MCF 10A (cell line): ENCODE measurements at regions of chr10 and their contacts with region 1.

Region 1: DNA sequence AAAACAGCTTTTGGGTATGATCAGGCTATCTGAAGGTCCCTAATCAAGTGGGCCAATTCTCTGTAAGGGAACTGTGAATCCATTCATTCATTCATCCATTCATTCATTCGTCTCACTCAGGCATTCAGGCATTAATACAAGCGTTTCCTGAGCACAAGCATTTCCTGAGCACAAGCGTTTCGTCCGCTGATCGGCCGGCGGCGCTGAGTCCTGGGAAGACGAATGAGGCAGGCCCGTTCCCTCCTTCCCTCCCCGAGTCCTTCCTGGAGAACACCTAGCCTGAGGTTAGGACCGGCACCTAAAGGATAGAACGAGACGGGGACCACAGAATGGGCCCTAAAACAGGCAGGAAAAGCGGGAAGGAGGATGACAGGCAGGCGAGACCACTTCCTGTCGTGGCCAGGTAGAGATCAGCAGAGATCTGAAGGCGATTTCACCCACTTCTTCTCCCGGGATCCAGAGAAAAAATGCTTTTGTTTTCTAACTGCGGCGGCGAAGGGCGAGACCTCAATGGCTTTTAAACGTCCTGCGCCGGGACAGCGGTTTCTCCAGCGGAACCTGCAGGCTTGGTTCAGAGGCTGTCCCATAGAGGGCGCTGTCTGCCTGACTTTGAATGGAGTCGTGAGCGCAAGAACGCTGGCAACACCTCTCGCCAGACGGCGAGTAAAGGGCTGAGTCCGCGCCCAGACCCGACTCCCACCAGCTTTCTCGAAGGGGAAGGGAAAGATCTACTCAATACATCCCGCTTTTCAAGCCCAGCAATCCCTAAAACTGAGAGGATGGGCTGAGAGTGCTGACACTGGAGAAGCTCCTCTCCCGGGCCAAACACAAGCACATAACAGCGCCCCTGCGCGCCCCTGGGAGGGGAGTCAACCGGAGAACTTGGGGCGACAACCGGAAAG is 2.9 kb upstream of the HMX3 start:
- DNase-seq: peak; percentile 84
- H3K4me3 Mint-ChIP-seq: peak overlapping the region; percentile 51
- H3K27ac Mint-ChIP-seq: no peak overlapping the region
- H3K4me1 Mint-ChIP-seq: peaks cover 8% of the 10 kb centered on the region
- H3K27me3 Mint-ChIP-seq: peaks cover 24% of the 10 kb centered on the region
- CTCF ChIP-seq: peak; percentile 87

Region 2: DNA sequence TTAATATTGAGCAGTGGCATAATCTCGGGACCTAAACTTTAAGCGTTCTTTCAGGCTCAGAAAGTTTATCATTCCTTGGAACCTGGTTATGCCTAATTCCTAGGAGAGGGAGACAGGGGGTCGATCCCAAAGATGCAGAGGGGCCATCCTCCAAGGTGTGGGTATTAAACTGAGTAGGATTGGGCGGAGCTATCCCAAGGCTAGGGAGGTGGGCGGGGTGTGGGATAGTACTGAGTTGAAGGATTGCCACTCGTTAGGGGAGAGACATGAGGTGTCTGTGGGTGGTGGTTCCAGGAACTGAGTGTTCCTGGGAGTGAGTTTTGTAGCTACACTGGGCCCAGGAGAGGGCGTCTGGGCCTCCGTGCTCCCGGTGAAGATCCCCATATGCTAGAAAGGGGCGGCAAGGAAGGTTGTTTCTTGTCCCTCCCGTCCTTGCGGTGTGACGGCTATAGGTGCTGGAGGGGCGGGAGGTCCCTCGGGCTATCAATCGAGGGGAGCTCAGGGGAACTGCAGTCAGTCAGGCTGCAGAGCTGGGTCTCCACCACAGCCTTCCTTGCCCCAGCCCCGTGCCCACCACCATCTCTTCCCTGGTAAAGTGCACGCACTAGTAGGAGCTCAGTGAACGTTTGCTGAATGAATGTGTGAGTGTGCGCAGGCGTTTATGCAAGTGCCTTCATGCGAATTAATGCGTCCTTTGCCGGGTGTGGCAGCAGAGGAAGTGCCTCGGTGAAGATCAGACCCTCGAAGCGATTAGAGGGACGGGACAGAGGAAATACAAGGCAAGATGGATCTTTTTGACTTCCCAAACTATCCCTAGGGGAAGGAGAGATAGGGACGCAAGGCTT is 12.1 kb after region 1 on chr10:
- CTCF ChIA-PET with region 1: interaction called, 10 read pairs
- POLR2A ChIA-PET with region 1: interaction called, 3 read pairs
- intact Hi-C with region 1: no loop called
- DNase-seq: no peak
- H3K4me3 Mint-ChIP-seq: no peak overlapping the region
- H3K27ac Mint-ChIP-seq: no peak overlapping the region
- H3K4me1 Mint-ChIP-seq: peaks cover 6% of the 10 kb centered on the region
- H3K27me3 Mint-ChIP-seq: peaks cover 35% of the 10 kb centered on the region
- CTCF ChIP-seq: no peak

Region 3: GRCh38 chr10:123380497-123381085 is 247.8 kb after region 1 on chr10:
- CTCF ChIA-PET with region 1: interaction called, 50 read pairs
- POLR2A ChIA-PET with region 1: interaction called, 5 read pairs
- intact Hi-C with region 1: loop called (anchors 1 kb)
- DNase-seq: peak; percentile 33
- H3K4me3 Mint-ChIP-seq: no peak overlapping the region
- H3K27ac Mint-ChIP-seq: no peak overlapping the region
- H3K4me1 Mint-ChIP-seq: peaks cover 18% of the 10 kb centered on the region
- H3K27me3 Mint-ChIP-seq: no peaks in the 10 kb centered on the region
- CTCF ChIP-seq: peak; percentile 41

Region 4: DNA sequence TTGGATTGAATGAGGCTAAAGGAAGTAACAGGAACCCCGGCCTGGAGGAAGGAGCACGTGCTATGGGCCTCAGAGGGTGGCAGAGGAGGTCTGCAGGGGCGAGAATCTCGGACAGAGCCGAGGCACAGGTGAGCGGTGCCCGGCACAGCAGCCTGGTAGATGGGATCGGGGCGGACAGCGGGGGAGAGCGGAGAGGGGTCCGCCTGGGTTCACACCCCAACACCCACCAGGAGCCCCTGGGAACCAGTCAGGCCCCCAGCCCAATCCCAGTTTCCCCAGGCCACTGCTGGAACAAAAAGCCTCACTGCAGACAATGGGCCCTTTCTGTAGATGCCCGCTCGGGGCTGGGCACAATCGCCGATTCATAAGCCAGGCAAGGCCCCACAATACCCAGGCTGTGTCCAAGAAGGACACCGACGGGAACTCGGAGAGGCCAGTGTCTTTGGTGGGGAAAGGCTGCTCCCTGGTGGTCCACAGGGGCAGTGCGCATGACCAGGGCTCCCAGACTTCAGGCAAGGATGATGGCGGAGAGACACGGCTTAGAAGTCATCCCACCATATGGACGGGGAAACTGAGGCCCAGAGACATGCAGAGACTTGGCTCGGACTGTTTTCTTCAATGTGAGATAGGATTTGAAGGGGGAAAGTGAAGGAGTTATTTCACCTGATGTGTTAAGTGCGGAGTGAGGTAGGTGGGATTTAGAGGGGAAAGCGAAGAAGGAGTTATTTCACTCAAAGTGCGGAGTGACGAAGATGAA is 426.4 kb after region 1 on chr10:
- CTCF ChIA-PET with region 1: interaction called, 19 read pairs
- POLR2A ChIA-PET with region 1: no interaction called
- intact Hi-C with region 1: loop called (anchors 1 kb)
- DNase-seq: peak; percentile 71
- H3K4me3 Mint-ChIP-seq: no peak overlapping the region
- H3K27ac Mint-ChIP-seq: no peak overlapping the region
- H3K4me1 Mint-ChIP-seq: no peaks in the 10 kb centered on the region
- H3K27me3 Mint-ChIP-seq: no peaks in the 10 kb centered on the region
- CTCF ChIP-seq: peak; percentile 97